H1 (cell line): ENCODE measurements at regions of chr1 and their contacts with region 1.

Region 1: GRCh38 chr1:24526940-24527542 is 24.4 kb downstream of the RCAN3 start:
- DNase-seq: no peak
- H3K4me3 ChIP-seq: no peak overlapping the region
- H3K27ac ChIP-seq: no peak overlapping the region
- H3K4me1 ChIP-seq: no peaks in the 10 kb centered on the region
- H3K27me3 ChIP-seq: no peaks in the 10 kb centered on the region; a peak in 1 of 7 replicates
- CTCF ChIP-seq: peak in 2 of 3 experiments; percentile 36 to 41; a peak in 2 of 4 replicates
- EP300 ChIP-seq: no peak
- POLR2A ChIP-seq: no peak
- RAD21 ChIP-seq: peak; percentile 27 to 39; a peak in 3 of 4 replicates

Region 2: DNA sequence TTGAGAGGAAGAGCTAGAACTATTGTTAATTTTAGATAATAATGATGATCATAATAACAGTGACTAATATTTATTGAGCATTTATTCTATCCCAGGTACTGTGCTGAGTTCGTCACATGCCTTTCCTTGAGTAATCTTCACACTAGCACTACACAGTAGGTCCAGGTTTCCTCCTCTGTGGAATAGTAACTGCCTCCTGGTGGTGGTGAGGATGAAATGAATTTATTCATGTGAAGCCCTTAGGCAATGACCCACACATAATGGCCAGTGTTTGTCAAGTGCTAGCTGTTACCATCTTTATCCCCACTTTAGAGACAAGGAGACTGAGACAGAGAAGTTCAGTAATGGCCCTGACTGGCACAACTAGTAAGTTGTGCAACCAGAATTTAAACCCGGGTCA is 105.5 kb before region 1 on chr1:
- CTCF ChIA-PET with region 1: interaction called, 22 read pairs
- POLR2A ChIA-PET with region 1: no interaction called
- DNase-seq: no peak
- H3K4me3 ChIP-seq: no peak overlapping the region
- H3K27ac ChIP-seq: no peak overlapping the region
- H3K4me1 ChIP-seq: no peaks in the 10 kb centered on the region; a peak in 2 of 7 replicates
- H3K27me3 ChIP-seq: no peaks in the 10 kb centered on the region
- CTCF ChIP-seq: peak in 1 of 3 experiments; percentile 22; a peak in 1 of 4 replicates
- EP300 ChIP-seq: no peak
- POLR2A ChIP-seq: no peak
- RAD21 ChIP-seq: peak in 1 of 2 experiments; percentile 28; a peak in 1 of 4 replicates

Region 3: DNA sequence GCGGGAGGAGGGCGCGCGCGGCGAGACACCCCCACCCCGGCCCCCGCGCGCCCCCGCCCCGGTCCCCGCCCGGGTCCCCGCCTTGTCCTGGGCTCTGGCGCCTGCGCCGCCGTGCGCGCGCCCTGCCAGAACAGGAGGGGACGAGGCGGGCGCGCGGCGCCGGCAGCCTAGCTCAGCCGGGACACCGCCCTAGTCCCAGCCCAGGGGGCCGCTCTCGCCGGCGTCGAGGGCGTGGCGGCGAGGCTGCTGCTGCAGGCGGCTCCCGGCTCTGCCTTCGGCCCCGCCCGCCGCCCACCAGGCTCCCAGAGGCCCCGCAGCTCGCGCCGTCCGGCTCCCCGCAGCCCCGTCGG is 24.4 kb before region 1 on chr1 and contains the start of gene RCAN3:
- CTCF ChIA-PET with region 1: interaction called, 18 read pairs
- POLR2A ChIA-PET with region 1: interaction called, 3 read pairs
- DNase-seq: peak; percentile 59 to 88
- H3K4me3 ChIP-seq: peak within 1 kb of the TSS; percentile 80 to 95 (median 86)
- H3K27ac ChIP-seq: no peak within 1 kb of the TSS
- H3K4me1 ChIP-seq: peaks cover 2 to 21% (median 11%) of the 10 kb centered on the region in 4 experiments; a peak in 6 of 7 replicates
- H3K27me3 ChIP-seq: peaks cover 0 to 7% (median 0%) of the 10 kb centered on the region in 4 experiments; a peak in 3 of 7 replicates
- CTCF ChIP-seq: no peak
- EP300 ChIP-seq: no peak
- POLR2A ChIP-seq: peak in 1 of 2 experiments; percentile 38; a peak in 1 of 3 replicates
- RAD21 ChIP-seq: no peak
- total RNA-seq, gene RCAN3: 15.2 and 16.6 TPM in 2 replicates

Region 4: GRCh38 chr1:24513706-24514105 is 13.3 kb before region 1 on chr1:
- CTCF ChIA-PET with region 1: interaction called, 85 read pairs
- POLR2A ChIA-PET with region 1: no interaction called
- DNase-seq: no peak
- H3K4me3 ChIP-seq: no peak overlapping the region
- H3K27ac ChIP-seq: no peak overlapping the region
- H3K4me1 ChIP-seq: peaks cover 0 to 4% (median 0%) of the 10 kb centered on the region in 4 experiments; a peak in 2 of 7 replicates
- H3K27me3 ChIP-seq: no peaks in the 10 kb centered on the region
- CTCF ChIP-seq: no peak
- EP300 ChIP-seq: no peak
- POLR2A ChIP-seq: no peak
- RAD21 ChIP-seq: no peak

Region 5: GRCh38 chr1:24541711-24542346 is 14.8 kb after region 1 on chr1:
- CTCF ChIA-PET with region 1: interaction called, 12 read pairs
- POLR2A ChIA-PET with region 1: no interaction called
- DNase-seq: peak in 1 of 2 experiments; percentile 76
- H3K4me3 ChIP-seq: no peak overlapping the region
- H3K27ac ChIP-seq: no peak overlapping the region
- H3K4me1 ChIP-seq: peaks cover 0 to 5% (median 0%) of the 10 kb centered on the region in 4 experiments; a peak in 1 of 7 replicates
- H3K27me3 ChIP-seq: no peaks in the 10 kb centered on the region
- CTCF ChIP-seq: peak; percentile 75 to 84 (median 78)
- EP300 ChIP-seq: no peak
- POLR2A ChIP-seq: no peak
- RAD21 ChIP-seq: peak; percentile 81 to 84

Region 6: GRCh38 chr1:24566236-24566867 is 39.3 kb after region 1 on chr1:
- CTCF ChIA-PET with region 1: no interaction called
- POLR2A ChIA-PET with region 1: no interaction called
- DNase-seq: no peak
- H3K4me3 ChIP-seq: no peak overlapping the region; a peak in 1 of 8 replicates
- H3K27ac ChIP-seq: no peak overlapping the region
- H3K4me1 ChIP-seq: peaks cover 3 to 14% (median 4%) of the 10 kb centered on the region in 4 experiments; a peak in 5 of 7 replicates
- H3K27me3 ChIP-seq: no peaks in the 10 kb centered on the region
- CTCF ChIP-seq: no peak
- EP300 ChIP-seq: no peak
- POLR2A ChIP-seq: no peak
- RAD21 ChIP-seq: no peak